ENCODE measurements at regions of chr13 and their contacts with region 1.

Region 1: GRCh38 chr13:94710881-94711560 is 1.3 kb downstream of the SOX21 start:
- DNase-seq: no peak
- H3K4me3 Mint-ChIP-seq: peak overlapping the region; percentile 42
- H3K27ac Mint-ChIP-seq: no peak overlapping the region
- H3K4me1 Mint-ChIP-seq: peaks cover 11% of the 10 kb centered on the region
- H3K27me3 Mint-ChIP-seq: peaks cover 79% of the 10 kb centered on the region

Region 2: DNA sequence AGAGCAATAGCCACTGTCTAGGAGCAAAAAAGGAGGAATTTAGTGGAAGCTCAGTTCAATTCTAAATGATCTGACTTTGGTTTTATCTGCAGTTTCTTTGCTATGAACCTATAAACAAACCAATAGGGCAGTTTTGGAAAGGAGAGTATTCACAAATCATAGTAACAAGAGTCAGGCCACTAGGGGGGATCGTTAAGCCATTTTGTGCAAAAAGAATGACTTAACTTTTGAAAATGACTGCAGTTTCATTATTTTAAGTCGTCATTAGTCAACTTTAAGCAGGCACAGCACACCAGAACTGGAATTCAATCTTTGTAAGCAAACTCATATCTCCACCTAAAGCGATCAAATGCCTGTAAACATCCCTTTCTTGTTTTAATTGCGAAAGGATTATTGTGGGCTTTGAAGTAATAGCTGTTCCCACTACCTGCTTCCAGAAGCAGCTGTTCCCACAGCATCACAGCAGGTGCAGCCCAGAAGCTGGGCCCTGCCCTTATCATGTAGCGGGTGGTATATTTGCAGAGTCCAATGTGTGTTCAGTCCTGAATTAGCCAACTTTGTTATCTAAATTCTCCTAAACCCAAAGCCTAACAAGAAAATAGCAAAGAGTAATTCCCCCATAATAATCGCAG is 50.2 kb before region 1 on chr13:
- intact Hi-C with region 1: loop called (anchors 2 kb)
- DNase-seq: no peak
- H3K4me3 Mint-ChIP-seq: no peak overlapping the region
- H3K27ac Mint-ChIP-seq: no peak overlapping the region
- H3K4me1 Mint-ChIP-seq: peaks cover 37% of the 10 kb centered on the region
- H3K27me3 Mint-ChIP-seq: peaks cover 13% of the 10 kb centered on the region

Region 3: GRCh38 chr13:95156208-95156607 is 445.2 kb after region 1 on chr13:
- intact Hi-C with region 1: loop called (anchors 5 kb)
- DNase-seq: no peak
- H3K4me3 Mint-ChIP-seq: no peak overlapping the region
- H3K27ac Mint-ChIP-seq: no peak overlapping the region
- H3K4me1 Mint-ChIP-seq: peaks cover 30% of the 10 kb centered on the region
- H3K27me3 Mint-ChIP-seq: no peaks in the 10 kb centered on the region

Region 4: DNA sequence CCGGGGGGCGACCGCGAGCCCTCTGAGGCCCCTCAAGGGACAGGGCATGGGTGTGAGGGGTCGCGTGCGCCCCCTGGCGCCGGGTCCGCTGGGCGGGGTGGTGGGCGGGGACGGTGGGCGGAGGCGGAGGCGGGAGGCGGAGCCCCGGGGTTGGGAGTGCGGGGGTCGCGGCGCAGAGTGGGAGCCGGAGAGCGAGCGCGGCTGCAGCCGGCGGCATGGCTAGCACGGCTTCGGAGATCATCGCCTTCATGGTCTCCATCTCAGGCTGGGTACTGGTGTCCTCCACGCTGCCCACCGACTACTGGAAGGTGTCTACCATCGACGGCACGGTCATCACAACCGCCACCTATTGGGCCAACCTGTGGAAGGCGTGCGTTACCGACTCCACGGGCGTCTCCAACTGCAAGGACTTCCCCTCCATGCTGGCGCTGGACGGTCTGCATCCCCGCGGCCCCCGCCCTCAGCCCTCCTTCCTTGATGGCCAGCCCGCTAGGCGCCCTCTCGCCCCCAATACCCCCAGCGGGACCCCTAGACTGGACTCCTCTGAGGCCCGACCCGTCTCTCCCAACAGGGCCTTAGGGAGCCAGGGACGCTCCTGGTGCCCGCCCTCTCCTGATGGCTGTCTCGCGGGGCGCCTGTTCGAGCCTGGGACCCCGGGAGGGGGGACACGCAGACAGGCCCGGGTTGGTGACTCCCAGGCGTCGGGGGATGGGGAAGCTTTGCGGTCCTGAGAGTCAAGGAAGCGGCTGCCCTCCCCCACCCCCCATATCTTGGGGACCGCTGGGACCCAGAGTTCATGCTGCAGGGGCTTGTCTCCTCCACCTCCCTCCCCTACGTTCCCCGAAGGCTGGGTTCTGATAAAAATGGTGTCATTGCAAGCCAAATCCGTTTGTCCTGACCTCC is 841.8 kb after region 1 on chr13 and contains the start of gene CLDN10:
- intact Hi-C with region 1: loop called (anchors 5 kb)
- DNase-seq: no peak
- H3K4me3 Mint-ChIP-seq: no peak within 1 kb of the TSS
- H3K27ac Mint-ChIP-seq: no peak within 1 kb of the TSS
- H3K4me1 Mint-ChIP-seq: peaks cover 7% of the 10 kb centered on the region
- H3K27me3 Mint-ChIP-seq: peaks cover 56% of the 10 kb centered on the region
- total RNA-seq, gene CLDN10: not detected in 2 replicates

Region 5: DNA sequence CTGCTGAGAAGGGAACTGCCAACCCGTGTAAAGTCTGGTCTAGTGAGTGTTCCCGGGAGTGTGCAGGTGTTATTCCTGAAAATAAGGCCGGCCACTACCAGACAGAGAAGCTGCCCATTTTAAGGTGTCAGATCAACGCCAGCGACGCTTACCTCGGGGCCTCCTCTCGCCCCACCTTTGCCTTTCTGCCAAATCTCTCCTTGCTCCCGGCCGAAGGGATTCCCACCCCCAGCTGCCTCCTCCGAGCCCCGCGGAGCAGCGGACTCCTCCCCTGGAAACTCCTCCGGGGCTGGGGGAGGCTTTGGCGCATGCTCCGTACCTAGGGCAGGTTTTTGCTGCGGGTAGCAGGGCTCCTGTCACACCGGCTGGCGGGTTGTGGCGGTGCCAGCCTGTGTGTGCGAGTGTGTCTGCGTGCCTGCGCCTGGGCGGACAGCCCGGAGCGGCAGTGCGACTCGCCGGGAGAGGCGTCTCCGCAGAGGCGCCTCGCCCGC is 1378.8 kb after region 1 on chr13 and contains the start of gene HS6ST3:
- intact Hi-C with region 1: loop called (anchors 5 kb)
- DNase-seq: no peak
- H3K4me3 Mint-ChIP-seq: no peak within 1 kb of the TSS
- H3K27ac Mint-ChIP-seq: no peak within 1 kb of the TSS
- H3K4me1 Mint-ChIP-seq: no peaks in the 10 kb centered on the region
- H3K27me3 Mint-ChIP-seq: peaks cover 55% of the 10 kb centered on the region
- total RNA-seq, gene HS6ST3: not detected in 2 replicates

Measured in activated T-helper 2 cell treated with anti-CD3 and anti-CD28 coated beads, Interferon-gamma antibody, Interleukin-2, Interleukin-4, amounts not matched to agents 10 μg/mL and 5 μg/mL and 100 μg/mL, durations not matched to agents 14 hours and 24 hours and 36 hours (primary cell).